Endothelial cell of umbilical vein (primary cell): ENCODE measurements at regions of chr11 and their contacts with region 1.

Region 1: DNA sequence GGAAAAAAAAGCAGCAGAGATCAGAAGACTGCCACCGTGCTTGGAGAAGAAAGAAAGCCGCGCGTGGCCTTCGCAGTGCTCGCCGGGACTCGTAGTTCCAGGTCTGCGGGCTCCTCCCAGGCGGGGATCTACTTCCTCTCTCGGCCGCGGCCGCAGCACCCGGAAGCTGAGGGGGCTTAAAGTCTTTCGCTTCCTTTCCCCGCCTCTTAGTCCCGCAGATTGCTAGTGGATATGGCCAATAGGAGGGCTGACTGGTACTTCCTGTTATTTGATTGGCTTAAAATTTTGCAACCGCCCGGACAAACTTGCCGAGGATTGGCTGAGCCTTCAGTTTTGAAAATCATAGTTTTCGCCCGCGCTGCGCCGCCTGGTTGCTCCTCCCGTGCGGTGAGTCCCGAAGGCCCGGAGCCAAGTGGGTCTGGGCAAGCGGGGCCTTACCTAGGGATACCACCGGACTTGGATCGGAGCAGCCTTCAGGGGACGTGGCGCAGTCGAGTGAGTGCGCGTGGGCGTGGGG is at the start of gene INCENP:
- DNase-seq: peak; percentile 100
- H3K4me3 ChIP-seq: peak within 1 kb of the TSS; percentile 53 to 84 (median 69)
- H3K27ac ChIP-seq: peak within 1 kb of the TSS; percentile 19
- H3K4me1 ChIP-seq: peaks cover 19% of the 10 kb centered on the region
- H3K27me3 ChIP-seq: peaks cover 0 to 2% of the 10 kb centered on the region in 2 experiments
- CTCF ChIP-seq: no peak
- POLR2A ChIP-seq: peak; percentile 67
- total RNA-seq, gene INCENP: 73.6 and 86.8 TPM in 2 replicates

Region 2: DNA sequence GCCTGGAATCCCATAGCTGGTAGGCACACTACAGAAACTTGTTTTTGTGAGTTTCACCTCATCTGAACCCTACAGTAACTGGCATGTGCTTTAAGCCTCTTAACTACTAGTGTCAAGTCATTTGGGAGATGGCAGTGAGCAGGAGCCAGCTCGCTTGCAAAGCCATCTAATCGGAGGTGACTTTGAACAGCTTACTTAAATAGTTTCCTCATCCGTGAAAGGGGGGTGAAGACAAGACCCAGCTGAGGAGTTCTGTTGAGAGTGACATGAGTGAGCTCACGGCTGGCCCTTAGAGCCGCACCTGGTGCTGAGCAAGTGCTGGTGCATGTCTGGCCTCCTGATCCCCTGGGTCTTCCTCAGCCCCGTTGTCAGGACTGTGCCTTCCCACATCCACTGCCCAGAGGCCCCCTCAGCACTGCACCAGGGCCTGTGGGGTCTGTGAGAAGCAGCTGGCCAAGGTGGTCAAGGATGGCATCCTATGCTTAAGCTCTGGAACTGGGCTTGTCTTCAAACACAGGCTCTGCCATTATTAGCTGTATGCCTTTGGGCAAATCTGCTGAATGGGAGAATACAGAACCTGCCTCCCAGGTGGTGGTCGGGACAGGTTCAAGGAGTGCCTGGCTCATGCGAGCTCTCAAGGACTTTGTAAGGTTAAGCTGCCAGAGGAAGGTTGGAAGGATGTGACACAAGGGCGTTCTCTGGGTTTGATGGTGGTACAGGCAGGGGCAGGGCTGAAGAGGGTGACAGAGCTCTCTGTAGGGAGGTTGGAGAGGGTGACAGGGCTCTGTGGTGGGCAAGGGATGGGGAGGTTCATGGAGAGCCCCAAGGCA is 27.4 kb after region 1 on chr11:
- CTCF ChIA-PET with region 1: no interaction called
- POLR2A ChIA-PET with region 1: no interaction called
- dilution Hi-C with region 1: no loop called
- intact Hi-C with region 1: loop called (anchors 2 kb)
- DNase-seq: no peak
- H3K4me3 ChIP-seq: no peak overlapping the region
- H3K27ac ChIP-seq: no peak overlapping the region
- H3K4me1 ChIP-seq: peaks cover 22% of the 10 kb centered on the region
- H3K27me3 ChIP-seq: no peaks in the 10 kb centered on the region
- CTCF ChIP-seq: no peak
- POLR2A ChIP-seq: no peak

Region 3: GRCh38 chr11:62208785-62209144 is 85.0 kb after region 1 on chr11:
- CTCF ChIA-PET with region 1: interaction called, 3 read pairs
- POLR2A ChIA-PET with region 1: no interaction called
- dilution Hi-C with region 1: no loop called
- intact Hi-C with region 1: loop called (anchors 1 kb)
- DNase-seq: no peak
- H3K4me3 ChIP-seq: no peak overlapping the region
- H3K27ac ChIP-seq: no peak overlapping the region
- H3K4me1 ChIP-seq: no peaks in the 10 kb centered on the region
- H3K27me3 ChIP-seq: peaks cover 0 to 4% of the 10 kb centered on the region in 2 experiments
- CTCF ChIP-seq: no peak
- POLR2A ChIP-seq: no peak